Calu3 (cell line): ENCODE measurements at regions of chr6 and their contacts with region 1.

Region 1: GRCh38 chr6:30883685-30884520 is at the start of gene DDR1:
- DNase-seq: peak; percentile 82
- H3K4me3 Mint-ChIP-seq: peak within 1 kb of the TSS; percentile 89
- H3K27ac Mint-ChIP-seq: peak within 1 kb of the TSS; percentile 94
- H3K4me1 Mint-ChIP-seq: peaks cover 63% of the 10 kb centered on the region
- H3K27me3 Mint-ChIP-seq: peaks cover 16% of the 10 kb centered on the region
- CTCF ChIP-seq: no peak
- total RNA-seq, gene DDR1: 489 and 580 TPM in 2 replicates

Region 2: GRCh38 chr6:30672445-30673253 is 211.3 kb before region 1 on chr6 and contains the start of gene DHX16:
- CTCF ChIA-PET with region 1: interaction called, 7 read pairs
- intact Hi-C with region 1: loop called (anchors 10 kb)
- DNase-seq: peak; percentile 98
- H3K4me3 Mint-ChIP-seq: peak within 1 kb of the TSS; percentile 84
- H3K27ac Mint-ChIP-seq: peak within 1 kb of the TSS; percentile 18
- H3K4me1 Mint-ChIP-seq: peaks cover 29% of the 10 kb centered on the region
- H3K27me3 Mint-ChIP-seq: no peaks in the 10 kb centered on the region
- CTCF ChIP-seq: peak; percentile 59
- total RNA-seq, gene DHX16: 51.6 and 55.6 TPM in 2 replicates

Region 3: GRCh38 chr6:30814136-30815040 is 69.5 kb before region 1 on chr6:
- CTCF ChIA-PET with region 1: interaction called, 10 read pairs
- intact Hi-C with region 1: no loop called
- DNase-seq: peak; percentile 77
- H3K4me3 Mint-ChIP-seq: peak overlapping the region; percentile 3
- H3K27ac Mint-ChIP-seq: peak overlapping the region; percentile 84
- H3K4me1 Mint-ChIP-seq: peaks cover 58% of the 10 kb centered on the region
- H3K27me3 Mint-ChIP-seq: no peaks in the 10 kb centered on the region
- CTCF ChIP-seq: no peak

Region 4: DNA sequence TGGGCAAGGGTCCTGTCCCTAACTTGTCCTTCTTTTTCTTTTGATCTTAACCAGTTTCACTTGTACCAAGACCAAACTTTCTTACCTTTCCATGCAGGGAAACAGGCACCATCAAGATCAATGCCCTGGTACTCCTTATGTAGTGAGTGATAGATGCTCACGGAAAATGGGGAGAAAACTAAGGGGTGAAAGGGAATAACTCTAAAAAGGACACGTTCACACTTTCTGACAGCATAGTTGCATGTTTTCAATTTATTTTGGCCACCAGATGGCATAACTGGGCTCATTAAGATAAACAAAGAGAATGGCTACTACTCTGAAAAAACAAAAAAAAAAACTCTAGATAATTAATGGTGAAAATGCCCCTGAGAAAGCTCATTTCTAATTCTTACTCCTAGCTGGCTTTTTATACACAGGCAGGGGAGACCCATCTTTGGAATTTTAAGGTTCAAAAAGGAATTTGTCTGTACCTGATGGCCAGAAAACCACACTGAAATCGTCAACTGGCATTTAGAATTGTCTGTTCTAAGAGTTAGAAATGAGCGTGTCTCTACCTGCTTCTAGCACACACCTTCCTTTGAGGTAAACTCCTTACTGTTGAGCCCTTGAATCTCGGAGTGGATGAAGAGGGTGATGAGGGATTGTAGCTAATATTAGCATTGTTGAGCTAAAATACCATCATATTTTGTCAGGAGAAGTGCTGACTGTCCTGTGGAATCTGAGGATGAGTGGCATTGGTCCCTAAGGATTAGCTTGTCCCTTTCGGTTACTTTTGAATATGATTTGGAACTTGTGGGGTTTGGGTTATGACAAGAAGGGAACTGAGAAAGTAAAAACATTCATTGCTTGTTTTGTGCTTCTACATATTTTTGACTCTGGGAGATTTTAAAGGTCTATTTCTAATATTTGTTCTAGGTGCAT is 61.8 kb before region 1 on chr6:
- CTCF ChIA-PET with region 1: interaction called, 26 read pairs
- intact Hi-C with region 1: no loop called
- DNase-seq: peak; percentile 50
- H3K4me3 Mint-ChIP-seq: no peak overlapping the region
- H3K27ac Mint-ChIP-seq: peak overlapping the region; percentile 43
- H3K4me1 Mint-ChIP-seq: peaks cover 65% of the 10 kb centered on the region
- H3K27me3 Mint-ChIP-seq: no peaks in the 10 kb centered on the region
- CTCF ChIP-seq: peak; percentile 71

Region 5: DNA sequence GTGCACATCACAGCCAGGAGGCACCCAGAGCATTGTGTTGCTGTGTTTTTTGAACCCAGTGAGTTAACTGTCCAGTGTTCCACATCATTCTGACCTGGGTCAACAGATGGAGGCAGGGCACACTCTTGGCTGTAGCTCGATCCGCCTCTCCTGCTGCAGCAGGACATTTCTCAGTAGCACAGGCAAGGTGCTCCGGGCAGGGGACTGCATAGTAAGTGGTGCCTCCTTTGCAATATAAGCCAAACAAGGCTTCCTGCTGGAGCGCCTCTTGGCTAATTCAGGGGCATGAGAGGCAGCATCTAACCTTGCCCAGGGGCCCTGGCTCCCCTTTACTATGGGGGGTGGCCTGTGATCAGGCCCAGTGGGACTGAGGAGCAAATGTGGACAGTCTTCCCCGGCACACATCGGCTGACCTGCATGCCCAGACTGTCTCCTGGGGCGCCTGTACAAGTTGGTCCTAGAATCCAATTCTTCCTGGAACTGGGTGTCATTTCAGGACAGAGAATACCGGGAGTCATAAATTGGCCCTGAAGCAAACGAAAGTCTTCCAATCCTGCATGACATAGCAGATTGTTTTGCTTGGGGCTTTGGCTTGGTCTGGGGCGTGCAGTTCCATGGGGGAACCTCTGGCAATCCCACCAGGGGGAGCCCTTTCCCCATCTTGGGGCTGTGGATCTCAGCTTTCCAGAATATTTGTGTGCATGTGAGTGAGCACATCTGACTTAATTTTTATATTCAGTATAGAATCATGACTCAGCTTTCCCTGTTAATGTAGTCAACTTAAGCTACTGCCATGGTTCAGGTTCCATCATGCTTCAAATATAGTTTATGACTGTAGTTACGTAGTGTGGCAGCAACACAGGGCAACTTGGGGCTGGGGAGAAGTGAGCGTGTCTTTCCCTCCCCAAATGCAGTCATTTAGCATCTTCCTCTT is 55.6 kb before region 1 on chr6:
- CTCF ChIA-PET with region 1: interaction called, 26 read pairs
- intact Hi-C with region 1: no loop called
- DNase-seq: peak; percentile 99
- H3K4me3 Mint-ChIP-seq: no peak overlapping the region
- H3K27ac Mint-ChIP-seq: peak overlapping the region; percentile 12
- H3K4me1 Mint-ChIP-seq: peaks cover 37% of the 10 kb centered on the region
- H3K27me3 Mint-ChIP-seq: no peaks in the 10 kb centered on the region
- CTCF ChIP-seq: peak; percentile 95

Region 6: DNA sequence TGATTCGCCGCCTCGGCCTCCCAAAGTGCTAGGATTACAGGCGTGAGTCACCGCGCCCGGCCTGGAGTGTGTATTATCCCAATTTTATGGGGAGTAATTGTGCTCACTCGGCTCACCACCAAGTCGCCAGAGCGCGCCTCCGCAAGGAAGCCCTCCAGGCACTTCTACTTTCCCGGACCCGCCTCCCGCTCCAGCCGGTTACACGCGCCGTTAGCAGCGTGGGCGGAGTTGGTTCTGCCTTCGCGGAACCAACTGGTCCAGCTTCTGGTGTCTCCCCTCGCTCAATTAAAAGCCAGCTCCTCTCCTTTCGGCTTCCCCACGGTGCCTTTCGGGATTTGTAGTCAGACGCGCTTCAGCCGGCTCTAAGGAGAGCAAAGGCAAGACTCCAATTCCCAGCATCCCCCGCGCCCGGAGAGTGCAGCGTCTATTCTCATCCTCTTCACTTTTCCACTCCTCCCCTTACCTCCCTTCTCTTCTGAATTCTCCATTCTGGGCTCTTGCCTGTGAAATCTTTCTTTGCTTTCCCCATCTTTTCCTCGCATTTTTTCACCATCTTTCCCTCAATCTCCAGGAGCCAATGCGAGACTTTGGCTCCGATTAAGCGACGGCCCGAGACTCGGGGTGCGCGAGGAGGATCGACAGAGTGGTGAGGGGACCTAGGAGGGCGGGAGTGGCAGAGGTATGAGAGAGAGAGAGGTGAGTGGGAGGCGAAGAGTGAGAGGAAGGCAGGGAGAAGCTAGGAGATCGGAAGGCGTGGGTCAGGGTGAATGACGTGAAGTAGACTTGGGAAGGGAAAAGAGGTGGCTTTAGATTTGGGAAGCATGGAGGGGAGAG is 24.1 kb after region 1 on chr6 and contains the start of gene GTF2H4:
- CTCF ChIA-PET with region 1: interaction called, 50 read pairs
- intact Hi-C with region 1: loop called (anchors 2 kb)
- DNase-seq: peak; percentile 99
- H3K4me3 Mint-ChIP-seq: peak within 1 kb of the TSS; percentile 97
- H3K27ac Mint-ChIP-seq: peak within 1 kb of the TSS; percentile 76
- H3K4me1 Mint-ChIP-seq: peaks cover 18% of the 10 kb centered on the region
- H3K27me3 Mint-ChIP-seq: no peaks in the 10 kb centered on the region
- CTCF ChIP-seq: no peak
- total RNA-seq, gene GTF2H4: 70.5 and 80.0 TPM in 2 replicates

Region 7: GRCh38 chr6:30935018-30935417 is 51.1 kb after region 1 on chr6:
- CTCF ChIA-PET with region 1: no interaction called
- intact Hi-C with region 1: no loop called
- DNase-seq: peak; percentile 83
- H3K4me3 Mint-ChIP-seq: no peak overlapping the region
- H3K27ac Mint-ChIP-seq: peak overlapping the region; percentile 67
- H3K4me1 Mint-ChIP-seq: peaks cover 68% of the 10 kb centered on the region
- H3K27me3 Mint-ChIP-seq: no peaks in the 10 kb centered on the region
- CTCF ChIP-seq: no peak